Adrenal gland (tissue), 19 donors: ENCODE measurements at regions of chrX and their contacts with region 1.

Region 1: GRCh38 chrX:20252381-20253231 is 14.1 kb downstream of the RPS6KA3 start:
- DNase-seq: peak; percentile 25 to 75 (median 49)
- H3K4me3 ChIP-seq: no peak overlapping the region
- H3K27ac ChIP-seq: peak overlapping the region in 1 of 5 donors; percentile 4
- H3K4me1 ChIP-seq: no peaks in the 10 kb centered on the region
- H3K27me3 ChIP-seq: no peaks in the 10 kb centered on the region
- CTCF ChIP-seq: peak; percentile 39 to 68 (median 52)
- POLR2A ChIP-seq: no peak

Region 2: DNA sequence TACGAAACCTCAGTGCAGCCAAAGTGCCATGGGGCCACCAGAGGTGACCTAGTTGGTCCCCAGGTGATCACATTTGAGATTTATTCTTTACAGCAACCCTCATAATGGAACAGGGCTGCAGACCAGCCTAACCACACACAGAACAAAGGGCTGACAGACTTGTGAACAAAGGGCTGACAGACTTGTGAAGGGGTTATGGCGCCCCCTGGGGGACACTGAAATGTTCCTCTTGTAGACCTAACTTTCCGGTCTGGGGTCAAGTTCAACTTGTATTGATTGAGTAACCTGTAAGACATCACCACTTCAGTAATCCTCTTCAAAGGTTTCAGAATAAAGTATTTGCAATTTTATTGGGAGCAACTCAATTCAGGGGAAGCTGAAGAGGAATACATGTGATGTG is 190.0 kb after region 1 on chrX:
- intact Hi-C with region 1: loop called in 1 of 2 experiments (anchors 10 kb)
- DNase-seq: peak; percentile 64 to 92 (median 85)
- H3K4me3 ChIP-seq: no peak overlapping the region
- H3K27ac ChIP-seq: no peak overlapping the region
- H3K4me1 ChIP-seq: no peaks in the 10 kb centered on the region
- H3K27me3 ChIP-seq: peaks cover 16% of the 10 kb centered on the region
- CTCF ChIP-seq: peak; percentile 50 to 67 (median 60)
- POLR2A ChIP-seq: no peak